CD8-positive, alpha-beta T cell (primary cell): ENCODE measurements at regions of chr17 and their contacts with region 1.

Region 1: GRCh38 chr17:81890447-81891299 is 713 bp downstream of the ALYREF start:
- DNase-seq: peak in 3 of 9 experiments; percentile 26 to 52 (median 38)
- ATAC-seq: no peak
- H3K4me3 ChIP-seq: peak overlapping the region; percentile 51 to 53
- H3K4me3 Mint-ChIP-seq: peak overlapping the region; percentile 87
- H3K27ac ChIP-seq: peak overlapping the region; percentile 54 to 57
- H3K27ac Mint-ChIP-seq: peak overlapping the region; percentile 95
- H3K4me1 ChIP-seq: peaks cover 19% of the 10 kb centered on the region
- H3K4me1 Mint-ChIP-seq: peaks cover 23% of the 10 kb centered on the region
- H3K27me3 ChIP-seq: no peaks in the 10 kb centered on the region
- H3K27me3 Mint-ChIP-seq: no peaks in the 10 kb centered on the region
- CTCF ChIP-seq: no peak

Region 2: GRCh38 chr17:81871387-81872230 is 19.1 kb before region 1 on chr17:
- CTCF ChIA-PET with region 1: interaction called, 6 read pairs
- POLR2A ChIA-PET with region 1: interaction called, 5 read pairs
- intact Hi-C with region 1: loop called (anchors 1 kb)
- DNase-seq: peak; percentile 90 to 97 (median 96)
- ATAC-seq: peak; percentile 29
- H3K4me3 ChIP-seq: peak overlapping the region; percentile 93 to 94
- H3K4me3 Mint-ChIP-seq: peak overlapping the region; percentile 87
- H3K27ac ChIP-seq: peak overlapping the region; percentile 96 to 98
- H3K27ac Mint-ChIP-seq: peak overlapping the region; percentile 96
- H3K4me1 ChIP-seq: peaks cover 39% of the 10 kb centered on the region
- H3K4me1 Mint-ChIP-seq: peaks cover 40% of the 10 kb centered on the region
- H3K27me3 ChIP-seq: no peaks in the 10 kb centered on the region
- H3K27me3 Mint-ChIP-seq: no peaks in the 10 kb centered on the region
- CTCF ChIP-seq: no peak